ENCODE measurements at regions of chr3 and their contacts with region 1.

Region 1: DNA sequence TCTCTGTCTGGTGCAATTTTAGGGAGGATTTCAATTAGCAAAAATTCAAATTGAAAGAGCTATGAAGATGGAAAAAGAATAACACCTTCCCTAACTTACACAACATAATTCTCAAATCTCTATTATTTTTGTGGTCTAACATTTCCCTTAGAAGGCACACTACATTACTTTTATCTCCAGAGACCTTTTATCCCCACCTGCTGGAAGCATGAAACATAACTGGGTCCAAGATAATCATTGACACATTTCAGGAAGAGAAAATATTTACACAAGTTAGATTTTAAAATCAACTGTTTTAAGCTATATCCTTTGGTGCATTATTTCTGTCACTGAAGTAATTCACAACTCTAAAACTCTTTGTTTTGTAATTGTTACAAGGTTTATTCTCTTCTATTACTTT is 779.5 kb downstream of the ROBO1 start:
- DNase-seq: peak; percentile 46
- ATAC-seq: peak; percentile 49
- H3K4me3 ChIP-seq: no peak overlapping the region
- H3K27ac ChIP-seq: no peak overlapping the region
- H3K4me1 ChIP-seq: no peaks in the 10 kb centered on the region
- H3K27me3 ChIP-seq: no peaks in the 10 kb centered on the region
- CTCF ChIP-seq: peak; percentile 54
- POLR2A ChIP-seq: no peak
- RAD21 ChIP-seq: peak; percentile 61

Region 2: GRCh38 chr3:78878789-78879188 is 109.5 kb before region 1 on chr3:
- CTCF ChIA-PET with region 1: no interaction called
- POLR2A ChIA-PET with region 1: interaction called, 20 read pairs
- dilution Hi-C with region 1: no loop called
- in situ Hi-C with region 1: no loop called
- intact Hi-C with region 1: no loop called
- DNase-seq: no peak
- ATAC-seq: no peak
- H3K4me3 ChIP-seq: no peak overlapping the region
- H3K27ac ChIP-seq: no peak overlapping the region
- H3K4me1 ChIP-seq: peaks cover 7% of the 10 kb centered on the region; the same call in 1 of the 2 replicates
- H3K27me3 ChIP-seq: no peaks in the 10 kb centered on the region
- CTCF ChIP-seq: no peak
- POLR2A ChIP-seq: no peak
- RAD21 ChIP-seq: no peak